Activated CD8-positive, alpha-beta memory T cell treated with anti-CD3 and anti-CD28 coated beads, Interleukin-2, amount 10 ng/mL, durations not matched to agents 7 days and 5 days (primary cell): ENCODE measurements at regions of chr6 and their contacts with region 1.

Region 1: DNA sequence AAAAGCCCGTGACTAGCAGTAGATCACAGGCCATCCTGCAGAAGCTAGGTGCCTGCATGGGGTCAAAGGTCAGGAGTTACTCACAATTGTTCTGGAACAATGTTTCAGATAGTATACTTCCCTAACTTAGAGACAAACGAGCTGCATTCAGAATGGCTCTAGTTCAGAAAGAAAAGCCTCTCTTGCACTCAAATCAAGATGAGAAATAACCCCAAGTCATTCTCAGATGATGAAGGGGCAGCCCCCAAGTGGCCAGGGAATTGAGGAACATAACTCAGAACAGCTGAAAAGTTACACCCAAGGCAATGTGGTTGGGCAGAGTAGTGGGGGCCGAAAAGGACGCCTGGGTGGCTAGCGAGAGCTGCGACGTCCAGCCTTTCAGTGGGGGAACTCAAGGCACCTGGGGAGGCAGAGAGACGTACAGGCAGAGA is 27.8 kb downstream of the FYN start:
- DNase-seq: no peak
- ATAC-seq: no peak
- H3K4me3 Mint-ChIP-seq: peak overlapping the region; percentile 67
- H3K27ac Mint-ChIP-seq: no peak overlapping the region
- H3K4me1 Mint-ChIP-seq: peaks cover 59% of the 10 kb centered on the region
- H3K27me3 Mint-ChIP-seq: no peaks in the 10 kb centered on the region

Region 2: DNA sequence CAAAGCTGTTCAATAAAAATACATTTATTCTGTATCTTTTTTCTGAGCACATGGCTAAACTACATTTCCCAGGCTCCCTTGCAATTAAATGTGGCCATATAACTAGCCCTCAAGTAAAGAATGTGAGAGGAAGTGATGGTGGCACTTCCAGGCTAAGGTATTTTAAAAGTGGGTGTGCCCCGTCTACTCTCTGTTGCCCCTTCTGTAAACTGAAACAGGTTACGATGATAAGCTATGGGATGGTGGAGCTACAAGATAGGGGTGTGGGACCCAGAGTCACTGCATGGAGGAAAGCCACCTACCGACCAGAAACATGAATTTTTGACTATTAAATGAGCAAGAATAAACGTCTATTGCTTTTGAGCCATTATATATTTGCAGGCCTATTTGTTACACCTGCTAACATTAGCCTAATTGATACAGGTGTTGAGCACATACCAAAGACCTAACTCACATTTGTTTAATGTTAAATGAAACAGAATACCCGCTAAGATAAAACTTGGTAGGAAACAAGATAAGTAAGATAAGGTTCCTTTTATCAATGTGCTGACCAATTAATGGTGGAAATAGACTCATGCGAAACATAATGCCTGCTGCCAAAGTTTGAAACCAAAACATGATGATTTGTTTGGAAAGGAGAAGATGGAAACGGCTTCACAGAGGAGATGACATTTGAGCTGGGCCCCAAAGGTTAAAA is 24.7 kb after region 1 on chr6:
- CTCF ChIA-PET with region 1: interaction called, 12 read pairs
- DNase-seq: no peak
- ATAC-seq: no peak
- H3K4me3 Mint-ChIP-seq: peak overlapping the region; percentile 90
- H3K27ac Mint-ChIP-seq: peak overlapping the region; percentile 93
- H3K4me1 Mint-ChIP-seq: peaks cover 65% of the 10 kb centered on the region
- H3K27me3 Mint-ChIP-seq: no peaks in the 10 kb centered on the region